Cardiac septum (tissue), 1 donor: ENCODE measurements at regions of chr1 and their contacts with region 1.

Region 1: DNA sequence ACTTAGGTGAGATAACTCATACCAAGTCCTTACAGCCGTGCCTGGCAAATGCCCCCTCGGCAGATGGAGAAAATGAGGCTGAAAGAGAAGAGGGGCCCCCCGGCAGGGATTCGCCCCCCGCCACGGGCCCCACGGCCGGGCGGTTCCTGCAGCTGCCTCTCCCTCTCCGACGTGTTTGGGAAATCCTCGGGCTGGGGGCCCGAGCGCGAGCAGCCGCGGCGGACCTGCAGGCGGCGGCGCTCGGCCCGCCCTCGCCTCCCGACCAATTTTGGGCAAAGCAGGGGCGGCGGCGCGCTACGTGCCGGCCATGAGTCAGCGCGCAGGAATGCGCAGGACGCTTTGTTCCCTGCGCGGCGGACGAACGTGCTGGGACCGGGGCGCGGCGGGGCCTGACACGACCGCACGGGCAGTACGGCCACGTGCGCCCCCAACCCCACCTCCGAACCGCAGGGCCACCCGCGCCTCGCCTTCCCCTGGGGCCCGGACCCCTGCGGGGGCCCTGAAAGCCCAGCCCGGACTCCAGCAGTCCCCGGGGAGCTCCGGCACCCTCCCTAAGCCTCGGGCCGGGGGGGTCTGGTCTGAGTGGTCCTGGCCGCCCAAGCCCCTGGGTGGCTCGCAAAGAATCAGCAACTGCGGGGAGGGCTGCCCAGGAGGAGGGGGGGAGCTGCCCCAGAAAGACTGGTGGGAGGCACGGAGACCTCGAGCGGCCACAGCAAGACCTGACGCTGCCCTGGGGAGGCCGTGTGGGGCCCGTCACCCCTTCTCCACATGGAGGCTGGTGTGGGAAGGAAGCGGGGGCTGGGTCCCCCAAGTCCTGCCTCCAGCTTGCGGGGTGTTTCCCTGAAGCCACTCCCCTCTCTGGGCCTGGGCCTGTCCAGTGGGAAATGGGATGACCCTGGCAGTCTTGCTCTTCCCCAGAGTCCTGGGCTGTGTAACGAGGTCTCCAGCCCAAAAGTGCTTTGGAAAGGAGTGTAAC is 11.9 kb upstream of the EDN2 start:
- DNase-seq: peak; percentile 91

Region 2: DNA sequence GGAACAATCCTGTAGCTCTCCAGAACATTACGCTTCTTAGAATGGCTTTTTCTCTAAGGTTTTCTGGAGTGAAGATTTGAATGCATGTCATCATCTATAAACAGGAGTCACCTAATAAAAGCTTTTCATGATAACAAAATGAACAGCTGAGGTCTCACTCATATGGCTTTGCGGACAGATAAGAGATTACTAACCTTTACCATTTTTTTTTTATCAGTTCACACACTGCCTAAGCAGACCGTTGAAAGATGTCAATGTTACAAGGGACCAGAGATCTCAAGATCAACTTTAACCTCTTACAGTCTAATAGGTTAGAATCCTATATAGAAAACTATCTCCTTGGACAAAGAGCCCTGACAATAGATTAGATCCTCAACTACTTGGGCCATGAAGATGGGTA is 295.6 kb before region 1 on chr1:
- intact Hi-C with region 1: no loop called
- DNase-seq: no peak

Region 3: DNA sequence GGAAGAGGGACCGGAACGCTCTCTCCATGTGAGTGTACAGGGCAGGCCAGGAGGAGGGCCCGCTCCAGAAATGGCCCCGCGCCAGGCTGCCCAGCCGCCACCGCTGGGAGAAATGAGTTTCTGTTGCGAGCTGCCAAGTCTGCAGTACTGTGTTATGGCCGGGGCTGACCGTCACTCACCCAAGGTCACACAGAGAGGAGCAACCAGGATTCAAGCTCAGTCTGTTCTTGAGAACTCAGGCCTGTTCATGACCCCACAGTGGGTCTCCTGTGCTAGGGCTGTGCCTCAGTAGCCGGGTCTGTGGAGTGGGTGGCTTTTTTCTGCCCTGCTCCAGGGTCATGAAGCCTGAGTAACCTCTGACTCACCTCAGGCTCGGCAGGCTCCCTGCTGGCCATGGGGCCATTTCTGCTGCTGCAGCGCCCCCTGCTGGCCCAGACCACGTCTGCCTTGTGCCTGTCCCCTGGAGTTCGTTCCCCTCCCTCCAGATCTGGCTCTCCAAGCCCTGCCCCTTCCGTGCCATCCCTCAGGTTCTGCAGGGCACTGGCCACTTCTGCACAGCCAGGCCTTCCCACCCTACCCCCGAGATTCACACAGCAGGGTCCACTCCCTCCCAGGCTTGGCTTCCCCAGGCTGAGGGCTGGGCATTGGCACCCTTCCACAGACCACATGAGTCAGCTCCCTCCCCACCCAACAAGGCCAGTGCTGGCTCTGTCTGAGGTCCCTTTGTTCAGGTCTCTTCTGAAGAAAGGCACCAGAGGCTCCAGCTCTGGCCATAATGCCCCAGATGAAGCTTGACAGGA is 63.7 kb before region 1 on chr1:
- intact Hi-C with region 1: loop called (anchors 2 kb)
- DNase-seq: peak; percentile 95

Region 4: GRCh38 chr1:41455479-41456332 is 40.7 kb before region 1 on chr1:
- intact Hi-C with region 1: loop called (anchors 5 kb)
- DNase-seq: peak; percentile 90

Region 5: GRCh38 chr1:41537788-41538351 is 41.5 kb after region 1 on chr1:
- intact Hi-C with region 1: loop called (anchors 2 kb)
- DNase-seq: peak; percentile 78

Region 6: GRCh38 chr1:41578712-41579332 is 82.5 kb after region 1 on chr1:
- intact Hi-C with region 1: no loop called
- DNase-seq: no peak

Region 7: GRCh38 chr1:41622859-41623723 is 126.7 kb after region 1 on chr1:
- intact Hi-C with region 1: no loop called
- DNase-seq: no peak